CD4-positive, alpha-beta T cell (primary cell): ENCODE measurements at regions of chr17 and their contacts with region 1.

Region 1: DNA sequence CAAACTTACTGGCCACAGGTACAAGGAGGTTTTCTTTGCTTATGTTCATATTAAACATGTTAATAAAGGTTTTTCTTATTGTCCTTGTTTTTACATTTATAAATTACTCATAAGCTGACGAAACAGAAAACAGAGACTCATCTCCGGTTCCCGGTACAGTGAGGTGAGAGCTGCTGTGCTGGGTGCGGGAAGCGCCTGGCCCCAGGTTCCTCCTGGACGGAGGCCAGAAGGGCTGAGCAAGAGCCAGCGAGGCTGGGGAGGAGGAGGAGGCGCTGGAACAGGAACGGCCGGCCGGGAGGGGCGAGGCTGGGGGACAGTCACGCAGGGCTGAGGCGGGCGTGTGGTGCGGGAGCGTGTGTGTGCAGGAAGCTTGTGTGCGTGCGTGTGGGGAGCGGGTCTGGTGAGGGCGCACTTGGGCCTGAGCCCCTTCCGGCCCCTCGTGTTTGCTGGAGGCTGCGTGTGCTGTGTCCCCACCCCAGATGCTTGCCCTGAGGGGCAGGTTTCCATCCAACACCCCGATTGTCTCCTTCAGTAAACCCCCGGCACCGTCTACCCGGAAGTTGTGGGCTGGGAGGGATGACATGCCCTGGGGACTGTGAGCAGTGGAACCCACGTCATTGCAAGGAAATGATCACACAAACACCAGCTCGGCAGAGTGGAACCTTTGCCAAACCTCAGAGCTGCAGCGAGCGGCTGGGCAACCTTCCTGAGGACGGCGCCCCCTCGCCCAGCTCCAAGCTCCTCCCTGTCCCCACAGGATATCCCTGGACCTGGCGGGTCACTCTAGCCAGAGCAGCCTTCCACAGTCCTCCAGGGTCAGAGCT is 19.5 kb downstream of the CD7 start:
- DNase-seq: peak; percentile 84 to 98 (median 90)
- ATAC-seq: peak; percentile 70
- H3K4me3 ChIP-seq: peak overlapping the region; percentile 70
- H3K4me3 Mint-ChIP-seq: peak overlapping the region; percentile 96
- H3K27ac ChIP-seq: peak overlapping the region; percentile 99 to 100
- H3K27ac Mint-ChIP-seq: peak overlapping the region; percentile 100
- H3K4me1 ChIP-seq: peaks cover 79% of the 10 kb centered on the region
- H3K4me1 Mint-ChIP-seq: peaks cover 84% of the 10 kb centered on the region
- H3K27me3 ChIP-seq: no peaks in the 10 kb centered on the region
- H3K27me3 Mint-ChIP-seq: no peaks in the 10 kb centered on the region
- CTCF ChIP-seq: no peak

Region 2: GRCh38 chr17:82236142-82236981 is 61.6 kb before region 1 on chr17:
- CTCF ChIA-PET with region 1: interaction called, 11 read pairs
- POLR2A ChIA-PET with region 1: interaction called, 21 read pairs
- intact Hi-C with region 1: loop called (anchors 2 to 10 kb)
- DNase-seq: peak; percentile 57 to 87 (median 66)
- ATAC-seq: peak; percentile 48
- H3K4me3 ChIP-seq: no peak overlapping the region
- H3K4me3 Mint-ChIP-seq: no peak overlapping the region
- H3K27ac ChIP-seq: peak overlapping the region in 1 of 2 donors; percentile 32
- H3K27ac Mint-ChIP-seq: peak overlapping the region; percentile 56
- H3K4me1 ChIP-seq: peaks cover 72% of the 10 kb centered on the region
- H3K4me1 Mint-ChIP-seq: peaks cover 40% of the 10 kb centered on the region
- H3K27me3 ChIP-seq: no peaks in the 10 kb centered on the region
- H3K27me3 Mint-ChIP-seq: no peaks in the 10 kb centered on the region
- CTCF ChIP-seq: peak; percentile 84

Region 3: GRCh38 chr17:82273327-82274133 is 24.4 kb before region 1 on chr17 and contains the start of gene CSNK1D:
- CTCF ChIA-PET with region 1: no interaction called
- POLR2A ChIA-PET with region 1: interaction called, 41 read pairs
- intact Hi-C with region 1: loop called (anchors 1 kb)
- DNase-seq: peak; percentile 84 to 95 (median 92)
- ATAC-seq: peak; percentile 79
- H3K4me3 ChIP-seq: peak within 1 kb of the TSS; percentile 75
- H3K4me3 Mint-ChIP-seq: peak within 1 kb of the TSS; percentile 98
- H3K27ac ChIP-seq: peak within 1 kb of the TSS; percentile 70 to 78
- H3K27ac Mint-ChIP-seq: peak within 1 kb of the TSS; percentile 99
- H3K4me1 ChIP-seq: peaks cover 50% of the 10 kb centered on the region
- H3K4me1 Mint-ChIP-seq: peaks cover 39% of the 10 kb centered on the region
- H3K27me3 ChIP-seq: no peaks in the 10 kb centered on the region
- H3K27me3 Mint-ChIP-seq: no peaks in the 10 kb centered on the region
- CTCF ChIP-seq: no peak
- total RNA-seq, gene CSNK1D: 277 to 286 TPM

Region 4: GRCh38 chr17:82320956-82321927 is 23.3 kb after region 1 on chr17:
- CTCF ChIA-PET with region 1: interaction called, 16 read pairs
- POLR2A ChIA-PET with region 1: interaction called, 157 read pairs
- intact Hi-C with region 1: loop called (anchors 1 kb)
- DNase-seq: peak; percentile 50 to 93 (median 64)
- ATAC-seq: peak; percentile 50
- H3K4me3 ChIP-seq: peak overlapping the region; percentile 45
- H3K4me3 Mint-ChIP-seq: peak overlapping the region; percentile 82
- H3K27ac ChIP-seq: peak overlapping the region in 1 of 2 donors; percentile 69
- H3K27ac Mint-ChIP-seq: peak overlapping the region; percentile 90
- H3K4me1 ChIP-seq: peaks cover 58% of the 10 kb centered on the region
- H3K4me1 Mint-ChIP-seq: peaks cover 33% of the 10 kb centered on the region
- H3K27me3 ChIP-seq: no peaks in the 10 kb centered on the region
- H3K27me3 Mint-ChIP-seq: no peaks in the 10 kb centered on the region
- CTCF ChIP-seq: peak; percentile 95

Region 5: DNA sequence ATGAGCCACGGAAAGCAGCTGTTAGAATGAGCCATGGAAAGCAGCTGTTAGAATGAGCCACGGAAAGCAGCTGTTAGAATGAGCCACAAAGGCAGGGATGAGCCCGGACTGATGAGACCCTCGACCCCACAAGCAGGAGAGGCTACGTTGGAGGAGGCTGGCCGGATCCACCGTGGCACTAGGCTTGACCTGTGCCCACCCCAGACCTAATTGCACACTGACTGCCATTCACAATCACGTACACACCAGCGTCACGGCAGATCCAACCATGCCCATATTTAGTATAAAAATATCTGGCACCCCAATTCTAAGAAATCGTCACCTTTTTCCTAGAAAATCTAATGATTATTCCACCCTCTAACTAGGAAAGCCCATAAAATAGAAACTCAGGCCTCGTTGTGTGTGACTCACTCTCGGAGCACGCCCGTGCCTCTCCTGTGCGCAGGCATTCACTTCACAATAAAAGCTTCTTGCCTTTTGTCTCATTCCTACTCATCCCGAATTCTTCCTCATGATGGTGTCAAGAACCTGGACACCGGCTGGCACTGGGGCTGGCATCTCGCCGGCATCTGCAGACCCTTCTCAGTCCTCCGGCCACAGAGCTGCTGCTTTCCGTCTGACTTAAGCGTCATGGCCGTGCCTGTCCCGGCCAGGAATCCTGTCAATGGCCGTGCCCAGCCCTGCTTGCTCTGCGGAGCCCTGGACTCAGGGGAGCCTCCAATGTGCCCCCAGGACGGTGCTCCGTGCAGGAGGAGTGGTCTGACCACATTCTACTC is 41.1 kb after region 1 on chr17:
- CTCF ChIA-PET with region 1: interaction called, 4 read pairs
- POLR2A ChIA-PET with region 1: interaction called, 33 read pairs
- intact Hi-C with region 1: loop called in 1 of 2 experiments (anchors 5 kb)
- DNase-seq: no peak
- ATAC-seq: no peak
- H3K4me3 ChIP-seq: no peak overlapping the region
- H3K4me3 Mint-ChIP-seq: no peak overlapping the region
- H3K27ac ChIP-seq: no peak overlapping the region
- H3K27ac Mint-ChIP-seq: no peak overlapping the region
- H3K4me1 ChIP-seq: peaks cover 14% of the 10 kb centered on the region
- H3K4me1 Mint-ChIP-seq: peaks cover 7% of the 10 kb centered on the region
- H3K27me3 ChIP-seq: peaks cover 0 to 5% of the 10 kb centered on the region in 2 experiments
- H3K27me3 Mint-ChIP-seq: peaks cover 4% of the 10 kb centered on the region
- CTCF ChIP-seq: no peak

Region 6: GRCh38 chr17:82668631-82669099 is 370.7 kb after region 1 on chr17:
- CTCF ChIA-PET with region 1: no interaction called
- POLR2A ChIA-PET with region 1: no interaction called
- intact Hi-C with region 1: no loop called
- DNase-seq: peak in 9 of 14 experiments; percentile 17 to 71 (median 36)
- ATAC-seq: peak; percentile 85
- H3K4me3 ChIP-seq: no peak overlapping the region
- H3K4me3 Mint-ChIP-seq: no peak overlapping the region
- H3K27ac ChIP-seq: no peak overlapping the region
- H3K27ac Mint-ChIP-seq: no peak overlapping the region
- H3K4me1 ChIP-seq: peaks cover 5% of the 10 kb centered on the region
- H3K4me1 Mint-ChIP-seq: peaks cover 12% of the 10 kb centered on the region
- H3K27me3 ChIP-seq: no peaks in the 10 kb centered on the region
- H3K27me3 Mint-ChIP-seq: no peaks in the 10 kb centered on the region
- CTCF ChIP-seq: peak; percentile 30